IMR-90 (cell line): ENCODE measurements at regions of chr2 and their contacts with region 1.

Region 1: GRCh38 chr2:84631047-84631446 is 114.7 kb downstream of the DNAH6 start:
- DNase-seq: peak; percentile 53
- ATAC-seq: peak; percentile 97
- H3K4me3 ChIP-seq: no peak overlapping the region
- H3K27ac ChIP-seq: no peak overlapping the region
- H3K4me1 ChIP-seq: no peaks in the 10 kb centered on the region
- H3K27me3 ChIP-seq: peaks cover 7% of the 10 kb centered on the region
- CTCF ChIP-seq: peak; percentile 60
- POLR2A ChIP-seq: no peak
- RAD21 ChIP-seq: peak; percentile 74

Region 2: DNA sequence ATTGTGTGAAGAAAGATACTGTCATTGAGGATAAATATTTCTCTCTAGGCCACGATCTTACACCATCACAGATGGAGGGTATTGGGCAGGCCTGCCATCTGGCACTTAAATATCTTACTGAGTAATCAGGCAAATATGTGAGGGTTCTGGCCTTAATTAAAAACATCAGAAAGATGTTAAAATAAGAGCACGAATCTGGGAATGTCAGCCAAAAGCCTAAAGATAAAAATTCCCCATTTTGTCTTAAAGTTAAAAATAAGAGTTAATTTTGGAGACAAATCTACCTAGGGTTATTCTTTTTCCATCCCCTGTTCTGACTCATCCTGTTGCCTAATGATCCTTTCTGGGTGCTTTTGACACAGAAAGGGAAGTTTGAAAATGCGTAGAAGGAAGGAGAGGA is 293.0 kb before region 1 on chr2:
- CTCF ChIA-PET with region 1: no interaction called
- POLR2A ChIA-PET with region 1: no interaction called
- dilution Hi-C with region 1: no loop called
- in situ Hi-C with region 1: no loop called
- intact Hi-C with region 1: no loop called
- DNase-seq: no peak
- ATAC-seq: no peak
- H3K4me3 ChIP-seq: no peak overlapping the region
- H3K27ac ChIP-seq: no peak overlapping the region
- H3K4me1 ChIP-seq: no peaks in the 10 kb centered on the region
- H3K27me3 ChIP-seq: no peaks in the 10 kb centered on the region
- CTCF ChIP-seq: no peak
- POLR2A ChIP-seq: no peak
- RAD21 ChIP-seq: no peak

Region 3: DNA sequence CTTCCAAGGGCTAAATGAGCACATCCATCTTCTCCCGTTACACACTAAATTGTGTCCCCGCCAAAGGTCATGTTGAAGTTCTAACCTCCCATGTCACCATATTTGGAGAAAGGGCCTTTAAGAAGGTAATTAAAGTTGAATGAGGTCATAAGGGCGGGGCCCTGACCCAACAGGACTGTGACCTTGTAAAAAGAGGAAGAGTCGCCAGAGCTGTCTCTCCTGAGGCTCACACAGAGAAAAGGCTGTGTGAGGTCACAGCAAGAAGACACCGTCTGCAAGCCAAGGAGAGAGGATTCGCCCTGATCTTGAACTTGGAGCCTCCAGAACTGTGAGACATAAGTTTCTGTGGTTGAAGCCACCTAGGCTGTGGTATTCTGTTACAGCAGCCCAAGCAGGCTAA is 225.7 kb after region 1 on chr2:
- CTCF ChIA-PET with region 1: no interaction called
- POLR2A ChIA-PET with region 1: interaction called, 3 read pairs
- dilution Hi-C with region 1: no loop called
- in situ Hi-C with region 1: no loop called
- intact Hi-C with region 1: loop called (anchors 5 kb)
- DNase-seq: no peak
- ATAC-seq: no peak
- H3K4me3 ChIP-seq: no peak overlapping the region
- H3K27ac ChIP-seq: no peak overlapping the region
- H3K4me1 ChIP-seq: no peaks in the 10 kb centered on the region; the same call in 1 of the 2 replicates
- H3K27me3 ChIP-seq: no peaks in the 10 kb centered on the region
- CTCF ChIP-seq: no peak
- POLR2A ChIP-seq: no peak
- RAD21 ChIP-seq: no peak